ENCODE measurements at regions of chr5 and their contacts with region 1.

Region 1: GRCh38 chr5:172006321-172007174 is at the start of gene FBXW11:
- DNase-seq: peak; percentile 94 to 96 (median 95)
- H3K4me3 ChIP-seq: peak within 1 kb of the TSS; percentile 96
- H3K27ac ChIP-seq: peak within 1 kb of the TSS; percentile 87 to 98
- H3K4me1 ChIP-seq: peaks cover 5% of the 10 kb centered on the region
- H3K27me3 ChIP-seq: no peaks in the 10 kb centered on the region
- CTCF ChIP-seq: no peak
- EP300 ChIP-seq: no peak
- POLR2A ChIP-seq: peak; percentile 81
- total RNA-seq, gene FBXW11: 49.8 to 73.4 (median 53.0) TPM

Region 2: DNA sequence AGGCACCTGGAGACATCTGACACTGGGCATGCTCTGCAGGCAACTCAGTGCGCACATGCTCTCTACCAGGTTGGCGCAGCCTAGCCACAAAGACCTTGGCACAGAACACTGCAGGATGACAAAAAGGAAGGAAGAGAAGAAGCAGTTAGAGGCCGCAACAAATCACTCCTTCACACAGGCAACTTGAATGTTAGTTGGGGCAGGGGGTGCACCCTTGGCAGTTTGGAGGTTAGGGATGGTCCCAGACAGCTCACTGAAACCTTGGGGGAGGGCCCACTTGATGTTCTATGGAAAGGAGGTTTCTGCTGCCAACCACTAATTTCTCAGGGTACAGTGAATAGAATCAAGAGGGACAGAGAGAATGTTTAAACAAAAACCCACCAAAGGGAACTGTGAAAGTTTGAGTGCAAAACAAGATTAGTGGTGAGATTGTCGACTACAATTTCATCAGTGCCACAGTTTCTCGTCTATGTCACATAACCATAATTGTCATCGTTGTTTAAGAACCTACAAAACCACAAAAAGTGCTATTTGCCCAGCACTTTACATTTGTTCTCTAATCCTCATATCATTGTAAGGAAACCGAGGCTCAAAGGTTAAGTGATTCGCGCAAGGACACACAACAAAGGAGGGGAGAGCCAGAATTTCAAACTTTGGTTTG is 48.8 kb before region 1 on chr5:
- intact Hi-C with region 1: loop called in 1 of 4 experiments (anchors 10 kb)
- DNase-seq: no peak
- H3K4me3 ChIP-seq: no peak overlapping the region
- H3K27ac ChIP-seq: no peak overlapping the region
- H3K4me1 ChIP-seq: peaks cover 13% of the 10 kb centered on the region
- H3K27me3 ChIP-seq: no peaks in the 10 kb centered on the region
- CTCF ChIP-seq: no peak
- EP300 ChIP-seq: no peak
- POLR2A ChIP-seq: no peak

Measured in ovary (tissue), 10 donors.